ENCODE measurements at regions of chr5 and their contacts with region 1.

Region 1: DNA sequence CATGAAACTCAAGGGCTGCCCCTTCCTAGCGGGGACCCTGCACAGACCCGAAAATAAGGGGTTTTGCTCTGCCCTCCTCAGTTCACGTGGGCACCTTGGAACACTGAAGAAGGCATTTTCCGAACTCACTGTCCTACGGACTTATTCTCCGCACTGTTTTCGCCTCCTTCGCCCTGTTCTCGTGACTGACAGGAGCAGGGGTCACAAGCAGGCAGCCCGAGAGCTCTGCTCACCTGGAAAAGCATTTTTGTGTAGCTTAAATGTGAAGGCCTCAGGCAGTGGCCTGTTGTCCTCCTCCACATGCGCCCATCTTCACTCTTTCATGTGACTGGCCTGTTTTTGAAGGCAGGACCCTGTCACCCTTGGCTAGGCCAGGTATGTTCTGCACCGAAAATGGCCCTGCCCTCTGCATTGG is 518 bp upstream of the CPLANE1 start:
- DNase-seq: peak; percentile 64
- H3K4me3 ChIP-seq: peak overlapping the region; percentile 82 to 89 (median 86)
- H3K27ac ChIP-seq: peak overlapping the region; percentile 89 to 96 (median 94)
- H3K4me1 ChIP-seq: peaks cover 0 to 26% (median 21%) of the 10 kb centered on the region in 4 donors
- H3K27me3 ChIP-seq: no peaks in the 10 kb centered on the region
- CTCF ChIP-seq: no peak
- EP300 ChIP-seq: no peak
- POLR2A ChIP-seq: no peak

Region 2: GRCh38 chr5:36934740-36935356 is 314.8 kb before region 1 on chr5:
- intact Hi-C with region 1: no loop called
- DNase-seq: no peak
- H3K4me3 ChIP-seq: no peak overlapping the region
- H3K27ac ChIP-seq: no peak overlapping the region
- H3K4me1 ChIP-seq: peaks cover 0 to 40% (median 13%) of the 10 kb centered on the region in 4 donors
- H3K27me3 ChIP-seq: no peaks in the 10 kb centered on the region
- CTCF ChIP-seq: no peak
- EP300 ChIP-seq: no peak
- POLR2A ChIP-seq: no peak

Region 3: DNA sequence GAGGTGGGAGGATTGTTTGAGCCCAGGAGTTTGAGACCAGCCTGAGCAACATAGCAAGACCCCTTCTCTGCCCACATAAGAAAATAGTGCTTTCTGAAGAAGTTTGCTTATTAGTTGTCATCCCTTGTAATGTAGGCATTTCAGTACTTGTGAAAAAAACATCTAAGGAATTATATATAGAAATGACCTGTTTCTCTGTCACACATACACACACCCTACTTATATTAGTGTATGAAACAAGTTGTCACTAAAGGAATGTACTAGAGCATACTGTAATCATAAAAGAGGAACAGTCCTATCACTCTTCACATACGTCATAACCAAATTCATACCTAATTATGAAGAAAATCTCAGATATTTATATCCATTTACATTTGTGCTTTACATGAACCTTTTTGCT is 251.1 kb before region 1 on chr5:
- intact Hi-C with region 1: no loop called
- DNase-seq: no peak
- H3K4me3 ChIP-seq: no peak overlapping the region
- H3K27ac ChIP-seq: no peak overlapping the region
- H3K4me1 ChIP-seq: peaks cover 0 to 7% (median 0%) of the 10 kb centered on the region in 4 donors
- H3K27me3 ChIP-seq: no peaks in the 10 kb centered on the region
- CTCF ChIP-seq: no peak
- EP300 ChIP-seq: no peak
- POLR2A ChIP-seq: no peak

Region 4: DNA sequence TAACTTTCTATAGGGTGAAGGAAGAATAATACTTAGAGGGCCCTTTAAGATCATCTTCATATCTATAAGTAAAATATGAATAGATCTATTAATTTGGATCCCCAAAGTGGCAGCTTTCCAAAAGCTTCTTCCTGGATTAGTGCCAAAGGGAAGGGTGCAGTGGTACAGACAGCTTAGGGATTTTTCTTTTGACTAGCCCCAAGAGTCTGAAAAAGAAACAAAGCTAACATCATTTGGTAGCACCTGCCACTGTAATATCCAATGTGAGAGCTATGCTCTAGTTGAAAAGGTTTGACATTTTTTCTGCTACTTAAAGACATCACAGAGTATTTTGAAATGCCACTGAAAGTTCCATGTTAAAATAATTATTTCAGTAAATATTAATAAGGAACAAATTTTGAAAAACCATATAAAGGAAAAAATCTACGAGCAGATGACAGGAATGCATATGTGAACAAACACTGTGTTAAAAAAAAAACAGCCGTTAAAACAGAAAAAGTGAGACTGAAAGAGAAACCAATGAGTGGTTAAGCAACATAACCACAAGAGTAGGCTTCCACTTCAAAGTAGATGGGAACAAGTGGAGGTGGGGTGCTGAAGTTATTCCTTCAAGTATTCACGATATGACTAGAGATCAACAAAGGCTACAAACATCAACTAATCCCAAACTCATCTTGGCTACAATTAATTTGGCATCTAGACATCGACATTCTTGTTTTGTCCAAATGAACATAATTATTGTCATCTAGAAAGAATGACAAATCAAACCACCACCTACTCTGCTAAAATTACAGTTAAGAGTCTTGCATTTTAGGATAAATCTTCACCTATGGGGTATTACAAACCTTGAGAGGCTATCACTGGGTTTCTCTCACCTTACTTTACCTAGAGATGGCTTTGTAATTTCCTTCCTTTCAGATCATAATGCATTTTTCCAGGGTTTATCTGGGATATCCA is 138.0 kb before region 1 on chr5:
- intact Hi-C with region 1: no loop called
- DNase-seq: no peak
- H3K4me3 ChIP-seq: no peak overlapping the region
- H3K27ac ChIP-seq: no peak overlapping the region
- H3K4me1 ChIP-seq: no peaks in the 10 kb centered on the region
- H3K27me3 ChIP-seq: no peaks in the 10 kb centered on the region
- CTCF ChIP-seq: no peak
- EP300 ChIP-seq: no peak
- POLR2A ChIP-seq: no peak

Region 5: DNA sequence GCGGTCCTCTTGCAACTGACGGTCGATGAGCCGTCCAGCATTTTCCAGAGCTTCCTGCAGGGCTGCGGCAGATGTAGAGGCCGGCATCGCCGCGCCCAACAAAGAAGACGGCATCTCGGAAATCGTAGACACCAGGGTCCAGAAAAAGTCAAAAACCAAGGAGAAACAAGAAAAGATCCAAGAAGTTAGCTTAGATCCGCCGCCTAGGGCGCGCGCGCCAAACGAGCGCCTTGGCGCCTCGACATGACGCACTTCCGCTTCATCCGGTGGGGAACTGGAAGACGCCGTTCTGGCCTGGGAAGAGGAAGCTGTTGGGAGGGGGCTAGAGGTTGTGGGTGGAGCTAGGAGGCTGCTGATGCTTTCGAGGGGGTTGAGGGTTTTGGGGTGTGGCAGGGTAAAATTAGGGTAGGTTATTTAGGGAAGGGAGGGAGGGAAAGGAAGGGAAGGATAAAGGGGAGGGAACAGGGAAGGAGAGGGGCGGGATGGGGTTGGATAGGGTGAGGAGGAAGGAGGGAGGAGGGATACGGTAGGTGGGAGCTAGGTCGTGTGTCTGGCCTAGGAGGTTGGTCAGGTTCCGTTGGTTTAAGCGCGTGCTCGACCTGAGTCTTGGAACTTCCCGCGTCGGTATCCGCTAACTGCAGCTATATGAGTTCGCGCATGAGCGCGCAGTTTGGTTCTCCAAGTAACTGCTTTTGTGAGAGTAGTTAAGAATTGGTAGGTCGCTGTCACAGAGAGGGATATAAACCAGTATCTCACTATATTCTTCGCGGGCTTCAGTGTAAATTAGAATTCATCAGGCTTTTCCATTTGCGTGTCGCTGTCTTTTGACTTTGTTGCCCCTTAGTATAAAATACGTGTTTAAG is 121.4 kb after region 1 on chr5 and contains the start of gene NUP155:
- intact Hi-C with region 1: loop called (anchors 5 kb)
- DNase-seq: peak; percentile 96
- H3K4me3 ChIP-seq: peak within 1 kb of the TSS; percentile 74 to 91 (median 84)
- H3K27ac ChIP-seq: peak within 1 kb of the TSS; percentile 83 to 90 (median 87)
- H3K4me1 ChIP-seq: peaks cover 0 to 36% (median 22%) of the 10 kb centered on the region in 4 donors
- H3K27me3 ChIP-seq: no peaks in the 10 kb centered on the region
- CTCF ChIP-seq: no peak
- EP300 ChIP-seq: no peak
- POLR2A ChIP-seq: peak; percentile 47 to 60
- total RNA-seq, gene NUP155: 12.7 to 24.4 (median 18.8) TPM

Measured in sigmoid colon (tissue), 7 donors.